ENCODE measurements at regions of chr16 and their contacts with region 1.

Region 1: GRCh38 chr16:58000706-58001676 is at the start of gene USB1:
- DNase-seq: peak; percentile 77
- ATAC-seq: peak; percentile 87
- H3K4me3 ChIP-seq: peak within 1 kb of the TSS; percentile 83 to 85
- H3K27ac ChIP-seq: peak within 1 kb of the TSS; percentile 87
- H3K4me1 ChIP-seq: peaks cover 18 to 30% of the 10 kb centered on the region in 2 experiments; a peak in 3 of 4 replicates
- H3K27me3 ChIP-seq: no peaks in the 10 kb centered on the region
- CTCF ChIP-seq: peak; percentile 33 to 60 (median 46); a peak in 3 of 6 replicates
- POLR2A ChIP-seq: peak; percentile 67
- RAD21 ChIP-seq: peak; percentile 64
- total RNA-seq, gene USB1: 73.1 TPM

Region 2: GRCh38 chr16:57720142-57720575 is 280.8 kb before region 1 on chr16:
- CTCF ChIA-PET with region 1: no interaction called
- POLR2A ChIA-PET with region 1: no interaction called
- RAD21 ChIA-PET with region 1: no interaction called
- intact Hi-C with region 1: loop called (anchors 10 kb)
- DNase-seq: no peak
- ATAC-seq: peak; percentile 96
- H3K4me3 ChIP-seq: no peak overlapping the region
- H3K27ac ChIP-seq: no peak overlapping the region
- H3K4me1 ChIP-seq: no peaks in the 10 kb centered on the region
- H3K27me3 ChIP-seq: 0 out of 2 replicates have a peak, but pooled peaks cover 7% of the 10 kb centered on the region
- CTCF ChIP-seq: peak; percentile 74 to 86 (median 83)
- POLR2A ChIP-seq: no peak
- RAD21 ChIP-seq: peak; percentile 75

Region 3: GRCh38 chr16:57834936-57835335 is 166.1 kb before region 1 on chr16:
- CTCF ChIA-PET with region 1: no interaction called
- POLR2A ChIA-PET with region 1: no interaction called
- RAD21 ChIA-PET with region 1: no interaction called
- intact Hi-C with region 1: no loop called
- DNase-seq: no peak
- ATAC-seq: peak; percentile 86
- H3K4me3 ChIP-seq: no peak overlapping the region
- H3K27ac ChIP-seq: no peak overlapping the region
- H3K4me1 ChIP-seq: peaks cover 4 to 11% of the 10 kb centered on the region in 2 experiments; a peak in 3 of 4 replicates
- H3K27me3 ChIP-seq: no peaks in the 10 kb centered on the region
- CTCF ChIP-seq: no peak
- POLR2A ChIP-seq: no peak
- RAD21 ChIP-seq: no peak

Region 4: GRCh38 chr16:57899771-57900661 is 101.0 kb before region 1 on chr16:
- CTCF ChIA-PET with region 1: interaction called, 4 read pairs
- POLR2A ChIA-PET with region 1: no interaction called
- RAD21 ChIA-PET with region 1: no interaction called
- intact Hi-C with region 1: loop called (anchors 1 kb)
- DNase-seq: peak; percentile 59
- ATAC-seq: peak; percentile 85
- H3K4me3 ChIP-seq: no peak overlapping the region
- H3K27ac ChIP-seq: no peak overlapping the region
- H3K4me1 ChIP-seq: peaks cover 0 to 13% of the 10 kb centered on the region in 2 experiments; a peak in 2 of 4 replicates
- H3K27me3 ChIP-seq: no peaks in the 10 kb centered on the region
- CTCF ChIP-seq: peak; percentile 86 to 92 (median 88)
- POLR2A ChIP-seq: no peak
- RAD21 ChIP-seq: peak; percentile 91

Region 5: DNA sequence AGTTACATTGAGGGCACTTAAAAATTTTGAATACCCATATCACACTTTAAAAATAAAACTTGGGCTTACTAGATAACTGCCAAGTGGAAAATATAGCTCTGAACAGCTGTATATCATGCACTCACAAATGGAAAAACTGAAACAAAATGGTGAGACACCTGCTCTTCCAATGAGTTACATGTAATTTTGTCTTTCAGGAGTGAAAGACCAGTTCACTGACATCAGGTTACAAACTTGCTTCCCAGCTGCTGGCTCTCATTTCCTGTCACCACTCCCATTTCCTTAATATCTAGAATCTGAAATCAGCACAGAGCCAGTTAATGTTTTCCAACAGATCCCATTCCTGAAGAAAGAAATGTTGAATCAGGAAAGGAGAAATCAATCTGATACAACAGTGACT is 186.1 kb after region 1 on chr16:
- CTCF ChIA-PET with region 1: no interaction called
- POLR2A ChIA-PET with region 1: no interaction called
- RAD21 ChIA-PET with region 1: no interaction called
- intact Hi-C with region 1: no loop called
- DNase-seq: no peak
- ATAC-seq: no peak
- H3K4me3 ChIP-seq: no peak overlapping the region
- H3K27ac ChIP-seq: no peak overlapping the region
- H3K4me1 ChIP-seq: no peaks in the 10 kb centered on the region
- H3K27me3 ChIP-seq: no peaks in the 10 kb centered on the region
- CTCF ChIP-seq: no peak
- POLR2A ChIP-seq: no peak
- RAD21 ChIP-seq: no peak

Measured in HCT116 (cell line).